ENCODE measurements at regions of chr7 and their contacts with region 1.

Region 1: GRCh38 chr7:107103363-107103762 is 58.9 kb downstream of the PRKAR2B start:
- DNase-seq: peak; percentile 71 to 76
- H3K4me3 ChIP-seq: no peak overlapping the region
- H3K27ac ChIP-seq: no peak overlapping the region
- H3K4me1 ChIP-seq: no peaks in the 10 kb centered on the region
- H3K27me3 ChIP-seq: no peaks in the 10 kb centered on the region
- CTCF ChIP-seq: no peak

Region 2: DNA sequence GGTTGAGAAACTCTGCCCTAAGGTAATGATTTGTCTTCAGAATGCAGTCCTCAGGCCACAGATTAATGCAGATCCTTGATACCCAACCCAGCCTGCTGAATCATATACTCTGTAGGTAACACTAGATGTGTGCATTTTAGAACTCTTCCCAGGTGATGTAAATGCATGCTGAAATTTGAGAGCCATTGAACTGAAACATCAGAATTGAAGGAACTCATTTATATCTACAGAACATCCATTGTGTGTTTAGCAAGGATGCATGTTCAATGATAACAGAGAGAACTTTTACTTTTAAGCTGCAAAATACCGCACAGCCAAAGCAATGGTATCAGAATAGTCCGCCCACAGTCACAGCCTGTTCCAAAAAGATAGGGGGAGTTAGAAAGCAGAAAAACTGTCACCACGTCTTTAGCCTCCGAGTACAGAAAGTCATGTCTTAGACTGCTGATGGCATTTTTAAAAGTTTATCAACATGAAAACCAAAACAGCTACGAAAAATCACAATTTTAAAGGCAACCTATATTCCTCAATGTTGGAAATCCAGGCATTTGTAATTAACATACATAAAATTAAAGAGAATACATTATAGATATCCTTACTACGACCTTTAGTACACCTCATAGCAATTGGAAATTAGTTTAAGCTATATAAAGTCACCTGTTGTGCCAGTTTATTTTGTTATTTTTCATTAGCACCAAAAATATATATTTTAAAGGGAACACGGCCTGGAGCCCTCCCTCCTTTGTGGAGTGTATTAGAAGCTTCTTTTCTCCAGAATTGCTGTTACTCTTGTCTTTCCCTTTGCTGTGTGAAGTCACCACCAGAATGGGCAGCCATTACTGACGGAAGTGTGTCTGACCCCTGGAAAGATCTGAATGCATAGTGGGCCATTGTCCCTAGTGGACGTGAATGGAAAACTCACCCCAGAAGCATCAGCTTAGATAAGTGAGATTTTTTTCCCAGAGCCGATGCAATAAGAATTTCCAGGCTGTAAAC is 124.6 kb before region 1 on chr7:
- CTCF ChIA-PET with region 1: interaction called, 13 read pairs
- POLR2A ChIA-PET with region 1: no interaction called
- intact Hi-C with region 1: no loop called
- DNase-seq: no peak
- H3K4me3 ChIP-seq: no peak overlapping the region
- H3K27ac ChIP-seq: no peak overlapping the region
- H3K4me1 ChIP-seq: no peaks in the 10 kb centered on the region
- H3K27me3 ChIP-seq: no peaks in the 10 kb centered on the region
- CTCF ChIP-seq: no peak

Region 3: DNA sequence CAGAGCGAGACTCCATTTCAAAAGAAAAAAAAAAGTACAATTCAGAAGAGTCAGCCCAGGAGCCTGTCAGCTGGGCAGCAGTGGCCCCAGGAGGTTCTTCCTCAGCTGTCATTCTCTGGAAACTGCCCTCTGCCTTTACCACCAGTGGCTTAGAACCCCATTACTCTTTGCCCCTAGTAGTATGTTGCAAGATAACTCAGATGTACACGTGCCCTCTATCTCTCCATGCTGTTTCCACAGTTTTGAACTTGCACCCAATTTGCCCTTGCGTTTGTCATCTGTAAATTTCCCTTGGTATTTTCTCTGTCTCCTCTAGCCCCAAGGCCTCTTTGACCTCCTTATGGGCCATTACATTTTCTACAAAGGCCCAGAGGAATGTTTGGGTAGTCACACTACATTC is 115.6 kb before region 1 on chr7:
- CTCF ChIA-PET with region 1: no interaction called
- POLR2A ChIA-PET with region 1: interaction called, 15 read pairs
- intact Hi-C with region 1: no loop called
- DNase-seq: no peak
- H3K4me3 ChIP-seq: no peak overlapping the region
- H3K27ac ChIP-seq: no peak overlapping the region
- H3K4me1 ChIP-seq: no peaks in the 10 kb centered on the region
- H3K27me3 ChIP-seq: no peaks in the 10 kb centered on the region
- CTCF ChIP-seq: no peak

Region 4: GRCh38 chr7:107047902-107048782 is 55.2 kb before region 1 on chr7:
- CTCF ChIA-PET with region 1: no interaction called
- POLR2A ChIA-PET with region 1: no interaction called
- intact Hi-C with region 1: loop called (anchors 2 kb)
- DNase-seq: no peak
- H3K4me3 ChIP-seq: no peak overlapping the region
- H3K27ac ChIP-seq: no peak overlapping the region
- H3K4me1 ChIP-seq: peaks cover 36% of the 10 kb centered on the region
- H3K27me3 ChIP-seq: no peaks in the 10 kb centered on the region
- CTCF ChIP-seq: no peak

Region 5: GRCh38 chr7:107130487-107131225 is 27.3 kb after region 1 on chr7:
- CTCF ChIA-PET with region 1: interaction called, 11 read pairs
- POLR2A ChIA-PET with region 1: no interaction called
- intact Hi-C with region 1: no loop called
- DNase-seq: no peak
- H3K4me3 ChIP-seq: no peak overlapping the region
- H3K27ac ChIP-seq: no peak overlapping the region
- H3K4me1 ChIP-seq: no peaks in the 10 kb centered on the region
- H3K27me3 ChIP-seq: no peaks in the 10 kb centered on the region
- CTCF ChIP-seq: no peak